ENCODE measurements at regions of chr17 and their contacts with region 1.

Region 1: GRCh38 chr17:1724506-1725362 is at the start of gene WDR81:
- DNase-seq: peak; percentile 84 to 99 (median 95)

Region 2: GRCh38 chr17:1684378-1685189 is 40.1 kb before region 1 on chr17 and contains the start of gene PRPF8:
- intact Hi-C with region 1: no loop called
- DNase-seq: peak; percentile 94 to 99 (median 98)

Region 3: DNA sequence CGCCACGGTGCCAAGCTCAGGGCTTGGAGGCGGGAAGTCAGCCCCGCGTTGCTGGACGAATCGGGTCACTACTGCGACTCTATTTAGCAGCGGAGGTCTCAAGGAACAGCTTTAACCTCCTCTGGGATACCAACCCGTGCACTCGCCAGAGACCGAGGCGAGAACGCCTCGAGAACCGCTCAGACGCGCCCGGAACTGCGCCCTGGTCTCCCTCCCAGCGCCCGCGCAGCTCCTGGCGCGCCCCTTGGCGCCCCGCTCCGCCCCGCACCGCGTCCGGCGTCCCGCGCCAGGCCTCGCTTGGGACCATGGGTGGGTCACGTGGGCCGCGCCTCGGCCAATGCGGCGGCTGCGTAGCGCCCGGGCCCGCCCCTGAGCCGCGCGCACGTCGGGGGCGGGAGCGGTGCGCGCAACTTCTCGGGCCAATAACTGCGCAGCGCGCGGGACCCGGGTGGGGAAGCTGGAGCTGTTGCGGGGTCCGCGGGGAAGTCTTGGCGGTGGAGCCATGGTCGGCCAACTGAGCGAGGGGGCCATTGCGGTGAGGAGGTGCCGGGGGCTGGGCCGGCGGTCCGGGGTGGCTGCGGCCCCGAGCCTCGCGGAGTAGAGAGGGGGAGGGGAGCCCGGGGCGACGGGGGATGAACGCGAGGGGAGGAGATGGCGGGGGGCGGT is 105.0 kb after region 1 on chr17 and contains the starts of genes RPA1 and SMYD4:
- intact Hi-C with region 1: loop called (anchors 5 kb)
- DNase-seq: peak; percentile 71 to 96 (median 92)